ENCODE measurements at regions of chr15 and their contacts with region 1.

Region 1: GRCh38 chr15:57866149-57866736 is 159.7 kb downstream of the POLR2M start:
- DNase-seq: peak; percentile 54 to 86 (median 82)
- ATAC-seq: peak; percentile 71
- H3K4me3 ChIP-seq: no peak overlapping the region
- H3K4me1 ChIP-seq: no peaks in the 10 kb centered on the region
- CTCF ChIP-seq: peak; percentile 67

Region 2: GRCh38 chr15:57921371-57921770 is 55.1 kb after region 1 on chr15:
- intact Hi-C with region 1: no loop called
- DNase-seq: no peak
- ATAC-seq: no peak
- H3K4me3 ChIP-seq: no peak overlapping the region
- H3K4me1 ChIP-seq: peaks cover 17% of the 10 kb centered on the region
- CTCF ChIP-seq: no peak

Region 3: DNA sequence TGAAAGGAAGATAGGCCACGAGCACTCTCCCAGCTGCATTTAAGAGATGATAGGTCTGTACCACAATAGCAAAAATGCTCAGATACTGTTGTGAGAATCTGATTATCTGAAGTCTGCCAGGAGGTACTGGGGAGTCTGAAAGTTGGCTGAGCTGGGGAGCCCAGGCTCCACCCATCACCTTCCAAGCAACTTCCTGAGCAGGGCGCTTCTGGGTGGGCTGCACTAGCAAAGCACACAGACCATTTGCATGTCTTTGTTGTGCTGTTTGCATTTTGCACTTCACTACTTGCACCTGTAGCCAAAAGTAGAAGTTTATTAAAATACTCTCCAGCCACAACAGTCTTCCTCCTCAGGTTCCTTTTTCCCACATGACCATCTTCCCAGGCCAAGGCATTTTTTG is 66.1 kb after region 1 on chr15:
- intact Hi-C with region 1: no loop called
- DNase-seq: no peak
- ATAC-seq: no peak
- H3K4me3 ChIP-seq: no peak overlapping the region
- H3K4me1 ChIP-seq: no peaks in the 10 kb centered on the region
- CTCF ChIP-seq: no peak

Region 4: DNA sequence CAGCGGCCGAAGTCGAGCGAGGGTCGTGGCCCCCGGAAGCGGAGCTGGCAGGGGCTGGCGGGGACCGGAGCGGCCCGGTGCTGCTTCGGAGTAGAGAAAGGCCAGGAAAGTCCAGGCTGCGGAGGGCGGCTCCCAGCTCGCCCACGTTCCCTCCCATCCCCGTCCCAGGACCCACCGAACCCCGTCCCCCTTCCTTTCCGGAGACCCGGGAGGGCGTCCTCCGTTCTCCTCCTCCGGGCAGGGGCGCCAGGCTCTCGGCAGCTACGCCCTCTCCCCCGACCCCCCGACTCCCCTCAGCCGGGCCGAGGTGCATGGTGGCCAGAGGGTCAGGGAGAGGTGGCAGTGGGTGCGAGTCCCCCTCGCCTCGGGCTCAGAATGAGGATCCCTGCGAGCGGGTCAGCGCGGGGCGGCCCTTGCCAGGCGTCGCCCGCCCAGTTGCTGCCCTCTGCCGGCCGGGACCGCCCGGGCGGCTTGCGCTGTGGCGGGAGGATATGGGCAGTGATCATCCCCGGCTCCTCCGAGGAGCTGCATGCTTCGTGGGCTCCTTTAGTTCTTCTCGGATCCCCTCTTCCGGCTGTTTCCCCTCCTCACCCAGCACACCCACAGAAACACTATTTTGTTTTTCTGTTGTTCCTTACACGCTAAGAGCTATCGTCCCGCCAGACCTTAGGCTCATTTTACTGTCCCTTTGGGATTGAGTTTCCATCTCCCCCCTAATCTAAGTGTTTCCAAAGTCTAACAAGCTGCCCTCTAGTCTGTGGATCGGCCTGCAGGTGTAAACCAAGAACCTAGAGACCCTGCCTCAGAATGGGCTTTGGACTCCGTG is 200.0 kb after region 1 on chr15:
- intact Hi-C with region 1: loop called (anchors 5 kb)
- DNase-seq: peak; percentile 65 to 82 (median 72)
- ATAC-seq: peak; percentile 98
- H3K4me3 ChIP-seq: no peak overlapping the region
- H3K4me1 ChIP-seq: peaks cover 15% of the 10 kb centered on the region
- CTCF ChIP-seq: peak; percentile 80